ENCODE measurements at regions of chr7 and their contacts with region 1.

Region 1: DNA sequence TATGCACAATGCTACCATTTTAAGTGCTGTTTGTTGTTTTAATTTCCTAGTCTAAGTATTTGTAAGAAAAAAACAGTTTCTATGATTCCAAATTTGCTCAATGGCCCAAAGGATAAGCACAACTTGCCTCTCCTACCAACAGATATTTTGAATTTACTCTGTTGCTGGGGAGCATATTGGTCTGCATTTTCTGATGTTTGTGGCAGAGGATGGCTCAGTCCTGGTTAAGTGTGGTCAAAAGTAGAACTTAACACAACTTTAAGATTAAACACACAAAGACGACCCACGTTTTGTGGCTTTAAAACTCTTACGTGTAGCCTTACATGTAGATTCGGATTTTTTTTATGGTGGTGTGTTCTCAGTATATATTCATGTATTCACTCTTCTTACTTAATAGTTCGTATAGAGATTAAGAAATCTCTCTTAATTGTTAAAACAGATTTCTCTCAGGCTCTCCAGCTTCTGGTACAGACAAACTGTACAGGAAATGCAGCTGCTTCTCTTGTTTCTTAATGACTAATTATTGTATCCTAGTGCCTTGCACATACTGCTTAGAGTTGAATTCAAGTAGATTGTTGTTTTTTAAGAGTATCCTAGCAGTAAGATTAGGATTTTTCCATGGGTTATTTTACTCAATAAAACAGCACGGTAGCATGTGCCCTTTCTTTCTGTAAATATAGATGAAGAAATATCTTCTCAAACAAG is 86.2 kb downstream of the GPR85 start:
- DNase-seq: no peak
- H3K4me3 ChIP-seq: no peak overlapping the region
- H3K27ac ChIP-seq: no peak overlapping the region
- H3K4me1 ChIP-seq: no peaks in the 10 kb centered on the region
- CTCF ChIP-seq: no peak

Region 2: GRCh38 chr7:112970771-112971170 is 29.7 kb before region 1 on chr7:
- CTCF ChIA-PET with region 1: no interaction called
- POLR2A ChIA-PET with region 1: interaction called, 11 read pairs
- intact Hi-C with region 1: no loop called
- DNase-seq: no peak
- H3K4me3 ChIP-seq: no peak overlapping the region
- H3K27ac ChIP-seq: no peak overlapping the region
- H3K4me1 ChIP-seq: no peaks in the 10 kb centered on the region
- CTCF ChIP-seq: peak; percentile 43

Region 3: DNA sequence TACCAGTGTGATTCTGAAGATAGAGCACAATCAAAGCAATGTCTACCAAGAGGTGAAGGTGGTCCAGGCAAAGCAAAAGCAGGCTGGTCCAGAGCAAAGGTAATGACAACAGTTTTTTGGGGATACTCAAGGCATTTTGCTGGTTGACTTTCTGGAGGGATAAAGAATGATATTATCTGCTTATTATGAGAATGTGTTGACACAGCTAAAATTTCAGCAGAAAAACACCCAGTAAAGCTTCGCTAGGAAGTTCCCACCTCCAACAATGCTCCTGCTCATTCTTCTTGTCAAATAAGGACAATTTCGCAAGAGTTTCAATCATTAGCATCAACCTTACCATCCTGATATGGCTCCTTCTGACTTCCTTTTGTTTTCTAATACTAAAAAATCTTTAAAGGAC is 62.0 kb after region 1 on chr7:
- CTCF ChIA-PET with region 1: no interaction called
- POLR2A ChIA-PET with region 1: no interaction called
- intact Hi-C with region 1: no loop called
- DNase-seq: no peak
- H3K4me3 ChIP-seq: no peak overlapping the region
- H3K27ac ChIP-seq: no peak overlapping the region
- H3K4me1 ChIP-seq: no peaks in the 10 kb centered on the region
- CTCF ChIP-seq: no peak

Measured in OCI-LY7 (cell line).